Colonic mucosa (tissue), 4 donors: ENCODE measurements at regions of chr5 and their contacts with region 1.

Region 1: GRCh38 chr5:149035372-149035790 is 27.5 kb downstream of the SH3TC2 start:
- DNase-seq: peak; percentile 72
- H3K4me3 ChIP-seq: no peak overlapping the region
- H3K27ac ChIP-seq: no peak overlapping the region
- H3K4me1 ChIP-seq: no peaks in the 10 kb centered on the region
- H3K27me3 ChIP-seq: no peaks in the 10 kb centered on the region
- CTCF ChIP-seq: peak; percentile 54

Region 2: GRCh38 chr5:148443998-148444397 is 591.4 kb before region 1 on chr5:
- intact Hi-C with region 1: loop called (anchors 10 kb)
- DNase-seq: peak; percentile 74
- H3K4me3 ChIP-seq: no peak overlapping the region
- H3K27ac ChIP-seq: no peak overlapping the region
- H3K4me1 ChIP-seq: peaks cover 4% of the 10 kb centered on the region
- H3K27me3 ChIP-seq: no peaks in the 10 kb centered on the region
- CTCF ChIP-seq: peak; percentile 52

Region 3: DNA sequence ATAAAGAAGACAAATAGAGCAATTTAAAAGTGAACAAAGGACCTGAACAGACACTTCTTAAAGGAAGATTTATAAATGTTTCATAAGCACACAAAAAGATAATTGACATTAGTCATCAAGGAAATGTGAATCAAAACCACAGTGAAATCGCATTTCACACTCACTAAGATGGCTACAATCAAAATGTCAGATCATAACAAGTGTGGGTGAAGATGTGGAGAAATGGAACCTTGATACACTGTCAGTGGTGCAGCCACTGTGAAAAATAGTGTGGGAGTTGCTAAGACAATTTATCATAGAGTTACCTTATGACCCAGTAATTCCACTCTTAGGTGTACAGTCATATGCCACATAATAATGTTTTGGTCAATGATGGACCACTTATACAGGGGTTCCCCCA is 326.5 kb before region 1 on chr5:
- intact Hi-C with region 1: no loop called
- DNase-seq: no peak
- H3K4me3 ChIP-seq: no peak overlapping the region
- H3K27ac ChIP-seq: no peak overlapping the region
- H3K4me1 ChIP-seq: no peaks in the 10 kb centered on the region
- H3K27me3 ChIP-seq: no peaks in the 10 kb centered on the region
- CTCF ChIP-seq: no peak

Region 4: DNA sequence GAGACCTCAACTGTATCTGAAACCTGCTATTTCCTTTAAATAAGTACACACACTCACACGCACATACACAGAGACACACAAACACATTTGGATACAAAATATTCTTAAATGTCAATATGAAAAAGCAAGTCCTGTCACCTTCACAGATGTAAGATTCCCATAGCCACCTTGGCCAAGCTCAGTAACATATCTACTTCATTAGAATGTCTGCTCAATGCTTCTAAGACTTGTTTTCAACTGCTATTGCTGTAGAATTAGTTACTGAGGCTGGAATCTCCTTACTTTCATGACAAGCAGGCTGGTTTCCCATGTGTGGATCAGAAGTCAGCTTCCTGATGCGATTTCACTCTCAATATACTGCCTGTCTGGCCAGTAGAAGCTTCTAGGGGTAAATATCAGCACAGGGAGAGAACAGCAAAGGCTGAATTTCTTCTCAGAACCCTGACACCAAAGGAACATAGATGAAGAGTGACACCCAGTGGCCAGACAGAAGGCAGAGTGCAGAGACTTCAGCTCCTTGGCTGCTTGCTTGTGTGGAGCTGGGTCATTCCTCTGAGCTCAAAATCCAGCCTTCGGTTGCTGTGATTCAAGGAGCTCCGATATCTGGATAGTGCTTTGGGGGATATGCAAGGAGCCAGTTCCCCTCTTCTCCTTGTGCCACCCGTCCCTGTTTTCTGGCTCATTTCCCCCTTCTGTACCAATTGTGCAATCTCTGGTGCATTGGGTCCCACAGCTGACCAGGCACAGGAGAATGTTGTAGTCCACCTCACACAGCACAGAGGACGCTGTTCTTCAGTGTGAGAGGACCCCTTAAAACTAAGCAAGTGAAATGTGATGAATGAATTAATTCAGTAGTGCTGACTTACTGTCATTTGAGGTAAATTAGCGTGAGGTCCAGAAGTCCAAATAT is 79.3 kb after region 1 on chr5:
- intact Hi-C with region 1: loop called (anchors 5 kb)
- DNase-seq: peak; percentile 54
- H3K4me3 ChIP-seq: no peak overlapping the region
- H3K27ac ChIP-seq: no peak overlapping the region
- H3K4me1 ChIP-seq: no peaks in the 10 kb centered on the region
- H3K27me3 ChIP-seq: no peaks in the 10 kb centered on the region
- CTCF ChIP-seq: peak; percentile 54

Region 5: GRCh38 chr5:149133795-149134780 is 98.7 kb after region 1 on chr5:
- intact Hi-C with region 1: no loop called
- DNase-seq: no peak
- H3K4me3 ChIP-seq: no peak overlapping the region
- H3K27ac ChIP-seq: no peak overlapping the region
- H3K4me1 ChIP-seq: no peaks in the 10 kb centered on the region
- H3K27me3 ChIP-seq: no peaks in the 10 kb centered on the region
- CTCF ChIP-seq: no peak

Region 6: GRCh38 chr5:149357370-149358293 is 322.3 kb after region 1 on chr5 and contains the start of gene PCYOX1L:
- intact Hi-C with region 1: no loop called
- DNase-seq: peak; percentile 93
- H3K4me3 ChIP-seq: peak within 1 kb of the TSS; percentile 70
- H3K27ac ChIP-seq: no peak within 1 kb of the TSS
- H3K4me1 ChIP-seq: no peaks in the 10 kb centered on the region
- H3K27me3 ChIP-seq: no peaks in the 10 kb centered on the region
- CTCF ChIP-seq: no peak
- total RNA-seq, gene PCYOX1L: 4.0 to 10.1 TPM